Body of pancreas (tissue), 4 donors: ENCODE measurements at regions of chr22 and their contacts with region 1.

Region 1: DNA sequence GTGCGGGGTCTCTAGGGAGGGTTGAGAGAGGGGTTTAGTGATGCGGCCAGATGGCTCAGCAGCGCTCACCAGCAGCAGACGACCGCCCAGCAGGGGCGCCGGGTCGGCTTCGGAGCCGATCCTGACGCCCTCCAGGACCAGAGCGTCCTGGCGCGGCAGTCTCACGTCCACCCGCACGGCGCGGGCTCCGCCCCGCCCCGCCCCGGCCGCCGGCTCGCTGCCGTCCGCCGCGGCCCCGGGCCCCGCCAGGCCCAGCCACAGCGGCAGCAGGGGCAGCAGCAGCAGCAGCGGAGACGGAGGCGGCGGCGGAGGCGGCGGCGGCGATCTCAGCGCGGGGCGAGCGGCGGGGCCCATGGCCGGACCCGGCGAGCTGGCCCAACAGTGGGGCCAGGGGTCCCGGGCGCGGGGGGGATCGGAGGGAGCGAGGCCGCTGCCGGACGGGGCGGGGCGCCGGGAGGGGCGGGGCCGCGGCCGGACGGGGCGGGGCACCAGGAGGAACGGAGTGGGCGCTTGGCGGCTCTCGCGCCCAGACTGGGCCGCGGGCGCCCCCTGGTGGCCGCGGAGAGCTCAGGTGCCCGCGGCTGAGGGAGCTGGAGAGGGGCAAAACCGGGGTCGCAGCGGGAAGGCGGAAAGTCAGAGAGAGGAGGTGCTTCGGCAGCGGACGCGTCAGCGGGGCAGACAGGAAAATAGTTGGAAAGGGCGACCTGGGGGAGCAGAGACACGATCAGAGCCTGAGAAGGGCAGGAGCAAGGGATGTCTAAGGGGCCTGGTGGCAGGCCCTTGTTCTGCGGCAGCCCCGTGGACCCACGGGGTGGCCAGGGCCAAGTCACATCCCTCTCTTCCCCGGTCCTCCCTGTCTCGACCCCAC is at the start of gene RNF215:
- DNase-seq: peak; percentile 77 to 87 (median 84)
- ATAC-seq: peak; percentile 94
- H3K4me3 ChIP-seq: peak within 1 kb of the TSS; percentile 37 to 74
- H3K27ac ChIP-seq: peak within 1 kb of the TSS; percentile 5 to 78 (median 64)
- H3K4me1 ChIP-seq: peaks cover 15% of the 10 kb centered on the region
- H3K27me3 ChIP-seq: no peaks in the 10 kb centered on the region
- CTCF ChIP-seq: peak; percentile 86 to 96 (median 94)
- POLR2A ChIP-seq: no peak
- total RNA-seq, gene RNF215: 13.8 to 14.0 TPM

Region 2: DNA sequence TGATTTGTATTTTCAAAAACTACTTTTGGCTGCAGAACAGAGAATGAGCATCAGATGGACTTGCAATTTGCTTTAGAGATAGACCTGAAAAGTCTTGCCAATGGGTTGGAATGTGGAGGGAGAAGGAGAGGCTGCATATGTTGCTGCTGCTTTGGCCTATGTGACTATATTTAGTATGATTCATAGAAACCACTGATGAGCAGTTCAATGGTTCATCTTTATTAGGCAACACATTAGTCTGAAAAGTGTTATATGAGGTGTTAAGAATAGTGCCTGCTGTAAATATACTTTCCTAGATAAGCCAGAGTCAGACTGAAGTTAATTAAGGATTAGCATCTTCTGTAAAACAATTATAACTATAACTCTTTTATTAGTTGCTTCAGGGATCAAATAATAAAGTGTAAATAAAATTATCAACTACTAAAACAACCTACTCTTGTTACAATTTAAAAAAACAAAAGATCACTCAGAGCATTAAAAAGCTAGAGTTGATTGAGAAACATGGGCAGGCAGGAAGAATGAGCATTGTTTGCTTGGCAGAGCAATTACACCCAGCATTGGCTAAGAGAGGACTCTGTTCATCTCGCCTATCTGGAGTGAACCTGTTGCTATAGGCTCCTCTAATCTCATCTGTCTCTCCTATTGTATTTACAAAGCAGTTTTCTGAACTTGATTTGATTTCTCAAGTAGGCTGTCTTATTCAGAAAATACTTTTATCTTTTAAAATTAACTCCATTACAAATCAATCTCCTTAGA is 270.7 kb before region 1 on chr22:
- intact Hi-C with region 1: loop called (anchors 10 kb)
- DNase-seq: no peak
- ATAC-seq: no peak
- H3K4me3 ChIP-seq: no peak overlapping the region
- H3K27ac ChIP-seq: no peak overlapping the region
- H3K4me1 ChIP-seq: no peaks in the 10 kb centered on the region
- H3K27me3 ChIP-seq: no peaks in the 10 kb centered on the region
- CTCF ChIP-seq: no peak
- POLR2A ChIP-seq: no peak

Region 3: GRCh38 chr22:30261134-30261533 is 126.1 kb before region 1 on chr22:
- intact Hi-C with region 1: loop called (anchors 2 kb)
- DNase-seq: no peak
- ATAC-seq: no peak
- H3K4me3 ChIP-seq: no peak overlapping the region
- H3K27ac ChIP-seq: no peak overlapping the region
- H3K4me1 ChIP-seq: peaks cover 9% of the 10 kb centered on the region
- H3K27me3 ChIP-seq: no peaks in the 10 kb centered on the region
- CTCF ChIP-seq: no peak
- POLR2A ChIP-seq: no peak

Region 4: DNA sequence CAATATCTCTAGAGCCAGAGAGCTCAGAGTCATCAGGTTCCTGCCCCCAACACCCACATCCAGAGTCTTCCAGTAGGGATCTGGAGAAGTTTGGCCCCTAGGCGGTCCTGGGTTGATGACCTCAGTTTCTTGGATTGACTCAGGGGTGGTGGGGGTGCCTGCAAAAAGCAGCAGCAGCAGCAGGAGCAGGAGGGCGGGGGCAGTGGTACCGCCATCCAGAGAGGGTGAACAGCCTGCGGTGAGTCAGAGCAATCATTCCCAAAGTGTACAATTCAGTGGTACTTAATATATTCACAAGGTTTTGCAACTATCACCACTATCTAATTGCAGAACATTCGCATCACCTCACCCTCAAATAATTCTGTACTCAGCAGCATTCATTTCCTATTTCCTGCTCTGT is 94.5 kb after region 1 on chr22:
- intact Hi-C with region 1: loop called (anchors 5 kb)
- DNase-seq: no peak
- ATAC-seq: no peak
- H3K4me3 ChIP-seq: no peak overlapping the region
- H3K27ac ChIP-seq: no peak overlapping the region
- H3K4me1 ChIP-seq: no peaks in the 10 kb centered on the region
- H3K27me3 ChIP-seq: no peaks in the 10 kb centered on the region
- CTCF ChIP-seq: no peak
- POLR2A ChIP-seq: no peak